ENCODE measurements at regions of chr16 and their contacts with region 1.

Region 1: GRCh38 chr16:2942045-2942444 is 22.0 kb upstream of the KREMEN2 start:
- DNase-seq: no peak
- H3K4me3 ChIP-seq: no peak overlapping the region
- CTCF ChIP-seq: no peak

Region 2: GRCh38 chr16:2919511-2920255 is 22.4 kb before region 1 on chr16:
- CTCF ChIA-PET with region 1: interaction called, 58 read pairs
- POLR2A ChIA-PET with region 1: no interaction called
- DNase-seq: no peak
- H3K4me3 ChIP-seq: no peak overlapping the region
- CTCF ChIP-seq: peak; percentile 74

Region 3: DNA sequence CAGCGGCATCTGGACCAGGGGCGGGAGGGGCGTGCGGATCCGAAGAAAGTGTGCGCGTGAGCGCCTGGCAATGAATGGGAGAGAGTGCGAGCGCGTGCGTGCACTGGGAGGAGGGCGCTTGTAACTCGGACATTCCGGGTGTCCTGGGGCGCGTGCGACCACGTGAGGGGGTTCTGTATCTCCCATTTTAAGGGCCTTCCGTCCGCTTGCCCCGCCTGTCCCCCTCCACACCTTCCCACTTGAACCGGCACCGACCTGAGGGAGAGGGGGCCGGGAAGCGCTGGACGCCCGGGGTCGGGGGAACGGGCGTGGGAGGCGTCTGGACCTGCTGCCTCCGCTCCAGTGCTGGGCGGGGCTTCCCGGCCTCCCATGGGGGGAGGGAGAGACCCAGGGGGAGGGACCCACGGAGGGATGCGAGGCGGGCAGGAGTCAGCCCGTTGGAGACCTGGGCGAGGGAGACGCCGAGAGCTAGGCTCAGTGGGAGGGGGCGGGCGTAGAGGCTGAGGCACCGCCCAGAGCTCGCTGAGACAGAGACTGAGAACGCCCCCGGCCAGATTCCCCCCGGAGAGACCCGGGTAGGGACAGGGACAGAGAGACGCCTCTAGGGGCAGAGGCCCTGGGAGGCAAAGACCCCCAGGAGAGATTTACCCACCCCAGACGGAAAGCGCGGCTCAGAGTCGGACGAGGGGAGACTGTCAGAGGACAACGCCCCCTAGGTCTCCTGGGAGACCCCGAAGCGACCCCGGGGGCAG is 21.9 kb after region 1 on chr16 and contains the start of gene KREMEN2:
- CTCF ChIA-PET with region 1: interaction called, 11 read pairs
- POLR2A ChIA-PET with region 1: no interaction called
- DNase-seq: no peak
- H3K4me3 ChIP-seq: peak within 1 kb of the TSS; percentile 37
- CTCF ChIP-seq: no peak

Measured in AG04449 (cell line).